Adrenal gland (tissue), 19 donors: ENCODE measurements at regions of chr17 and their contacts with region 1.

Region 1: DNA sequence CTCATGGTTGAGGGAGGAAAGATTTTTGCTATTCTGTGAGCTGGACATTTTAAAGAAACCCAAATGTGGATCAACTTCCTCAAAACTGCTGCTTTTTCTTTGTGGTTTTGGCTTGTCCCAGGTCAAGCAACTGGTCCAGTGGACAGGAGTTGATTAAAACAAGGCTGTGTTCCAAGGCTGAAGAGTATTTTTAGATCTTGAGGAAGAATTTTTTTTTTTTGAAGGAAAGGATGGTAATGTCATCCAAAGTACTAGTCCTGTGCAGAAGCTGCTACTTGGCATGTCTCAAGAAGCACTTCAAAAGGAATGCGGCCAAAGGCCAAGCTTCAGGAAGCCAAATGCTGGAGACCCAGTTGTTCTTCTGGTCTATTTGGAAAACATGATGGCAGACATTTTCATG is 8.0 kb upstream of the MYH2 start:
- DNase-seq: no peak
- H3K4me3 ChIP-seq: no peak overlapping the region
- H3K27ac ChIP-seq: no peak overlapping the region
- H3K4me1 ChIP-seq: no peaks in the 10 kb centered on the region
- H3K27me3 ChIP-seq: no peaks in the 10 kb centered on the region
- CTCF ChIP-seq: no peak
- POLR2A ChIP-seq: no peak

Region 2: GRCh38 chr17:10417431-10417830 is 140.0 kb before region 1 on chr17:
- intact Hi-C with region 1: loop called in 1 of 2 experiments (anchors 10 kb)
- DNase-seq: no peak
- H3K4me3 ChIP-seq: no peak overlapping the region
- H3K27ac ChIP-seq: no peak overlapping the region
- H3K4me1 ChIP-seq: no peaks in the 10 kb centered on the region
- H3K27me3 ChIP-seq: no peaks in the 10 kb centered on the region
- CTCF ChIP-seq: no peak
- POLR2A ChIP-seq: no peak